ENCODE measurements at regions of chr13 and their contacts with region 1.

Region 1: GRCh38 chr13:45280751-45281634 is 60.0 kb downstream of the TPT1 start:
- DNase-seq: no peak
- H3K4me3 ChIP-seq: no peak overlapping the region
- H3K27ac ChIP-seq: no peak overlapping the region
- H3K4me1 ChIP-seq: peaks cover 0 to 18% (median 8%) of the 10 kb centered on the region in 4 donors
- H3K27me3 ChIP-seq: no peaks in the 10 kb centered on the region
- CTCF ChIP-seq: peak; percentile 74 to 85 (median 83)
- EP300 ChIP-seq: no peak
- POLR2A ChIP-seq: no peak

Region 2: GRCh38 chr13:45194081-45194939 is 86.7 kb before region 1 on chr13:
- intact Hi-C with region 1: loop called (anchors 2 kb)
- DNase-seq: no peak
- H3K4me3 ChIP-seq: no peak overlapping the region
- H3K27ac ChIP-seq: no peak overlapping the region
- H3K4me1 ChIP-seq: peaks cover 0 to 8% (median 2%) of the 10 kb centered on the region in 4 donors
- H3K27me3 ChIP-seq: no peaks in the 10 kb centered on the region
- CTCF ChIP-seq: peak; percentile 49 to 61 (median 53)
- EP300 ChIP-seq: no peak
- POLR2A ChIP-seq: no peak

Region 3: GRCh38 chr13:45464687-45465453 is 183.9 kb after region 1 on chr13 and contains the start of gene COG3:
- intact Hi-C with region 1: no loop called
- DNase-seq: peak; percentile 98
- H3K4me3 ChIP-seq: peak within 1 kb of the TSS; percentile 70 to 89 (median 80)
- H3K27ac ChIP-seq: peak within 1 kb of the TSS; percentile 86 to 96 (median 90)
- H3K4me1 ChIP-seq: peaks cover 22 to 44% (median 38%) of the 10 kb centered on the region in 4 donors
- H3K27me3 ChIP-seq: no peaks in the 10 kb centered on the region
- CTCF ChIP-seq: peak in 1 of 3 experiments; percentile 44
- EP300 ChIP-seq: no peak
- POLR2A ChIP-seq: peak; percentile 62
- total RNA-seq, gene COG3: 17.7 to 28.2 (median 21.3) TPM